ENCODE measurements at regions of chr1 and their contacts with region 1.

Region 1: GRCh38 chr1:216476341-216476740 is 53.1 kb upstream of the USH2A start:
- DNase-seq: no peak
- H3K4me3 ChIP-seq: no peak overlapping the region
- H3K27ac ChIP-seq: no peak overlapping the region
- H3K4me1 ChIP-seq: no peaks in the 10 kb centered on the region
- CTCF ChIP-seq: no peak

Region 2: GRCh38 chr1:216388558-216388957 is 87.8 kb before region 1 on chr1:
- CTCF ChIA-PET with region 1: no interaction called
- POLR2A ChIA-PET with region 1: no interaction called
- intact Hi-C with region 1: no loop called
- DNase-seq: no peak
- H3K4me3 ChIP-seq: no peak overlapping the region
- H3K27ac ChIP-seq: no peak overlapping the region
- H3K4me1 ChIP-seq: no peaks in the 10 kb centered on the region
- CTCF ChIP-seq: no peak

Region 3: DNA sequence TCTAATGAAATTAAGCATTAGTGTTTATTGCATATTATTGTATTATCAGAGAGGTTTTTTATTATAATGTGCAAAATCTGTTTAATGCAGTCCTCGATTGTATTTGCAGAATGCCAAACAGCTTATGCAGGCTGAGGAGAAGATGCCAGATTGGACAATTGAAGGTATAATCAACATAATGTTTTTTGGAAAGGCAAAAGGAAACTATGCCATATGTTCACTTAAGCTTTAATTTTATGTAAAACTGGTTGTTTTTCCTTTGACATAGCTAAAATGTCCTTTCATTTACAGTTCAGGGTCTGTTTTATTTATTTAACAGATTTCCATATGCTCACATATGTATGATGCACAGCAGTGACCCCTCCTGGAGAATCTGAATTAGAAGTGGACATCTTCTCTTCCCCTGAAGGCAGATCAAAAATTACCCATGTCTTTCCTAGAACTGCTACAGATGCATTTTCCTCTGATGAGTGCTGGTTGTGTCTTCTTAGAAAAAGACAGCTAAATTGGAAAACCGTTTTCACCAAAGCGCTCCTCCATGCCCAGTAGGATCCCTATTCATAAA is 90.4 kb after region 1 on chr1:
- CTCF ChIA-PET with region 1: no interaction called
- POLR2A ChIA-PET with region 1: no interaction called
- intact Hi-C with region 1: loop called (anchors 10 kb)
- DNase-seq: no peak
- H3K4me3 ChIP-seq: no peak overlapping the region
- H3K27ac ChIP-seq: no peak overlapping the region
- H3K4me1 ChIP-seq: no peaks in the 10 kb centered on the region
- CTCF ChIP-seq: peak; percentile 55

Measured in OCI-LY7 (cell line).